GM12878 (cell line): ENCODE measurements at regions of chr3 and their contacts with region 1.

Region 1: GRCh38 chr3:16828815-16829214 is 55.9 kb upstream of the PLCL2 start:
- DNase-seq: no peak
- ATAC-seq: peak; percentile 90
- H3K4me3 ChIP-seq: no peak overlapping the region
- H3K27ac ChIP-seq: no peak overlapping the region
- H3K4me1 ChIP-seq: peaks cover 8% of the 10 kb centered on the region
- H3K27me3 ChIP-seq: no peaks in the 10 kb centered on the region
- CTCF ChIP-seq: peak; percentile 58 to 65 (median 60)
- EP300 ChIP-seq: no peak
- POLR2A ChIP-seq: no peak
- RAD21 ChIP-seq: peak; percentile 93

Region 2: GRCh38 chr3:17032407-17033034 is 203.7 kb after region 1 on chr3:
- CTCF ChIA-PET with region 1: interaction called, 39 read pairs
- POLR2A ChIA-PET with region 1: no interaction called
- RAD21 ChIA-PET with region 1: interaction called, 34 read pairs
- SMC1A ChIA-PET with region 1: interaction called, 15 read pairs
- in situ Hi-C with region 1: no loop called
- intact Hi-C with region 1: loop called (anchors 5 kb)
- DNase-seq: no peak
- ATAC-seq: peak; percentile 81
- H3K4me3 ChIP-seq: no peak overlapping the region
- H3K27ac ChIP-seq: no peak overlapping the region
- H3K4me1 ChIP-seq: peaks cover 15% of the 10 kb centered on the region
- H3K27me3 ChIP-seq: no peaks in the 10 kb centered on the region
- CTCF ChIP-seq: peak; percentile 54 to 64 (median 54); a peak in 5 of 6 replicates
- EP300 ChIP-seq: no peak
- POLR2A ChIP-seq: no peak
- RAD21 ChIP-seq: peak; percentile 76

Region 3: GRCh38 chr3:17227472-17227871 is 398.7 kb after region 1 on chr3:
- CTCF ChIA-PET with region 1: interaction called, 14 read pairs
- POLR2A ChIA-PET with region 1: no interaction called
- RAD21 ChIA-PET with region 1: interaction called, 33 read pairs
- SMC1A ChIA-PET with region 1: interaction called, 10 read pairs
- in situ Hi-C with region 1: loop called (anchors 5 kb)
- intact Hi-C with region 1: no loop called
- DNase-seq: no peak
- ATAC-seq: no peak
- H3K4me3 ChIP-seq: no peak overlapping the region
- H3K27ac ChIP-seq: no peak overlapping the region
- H3K4me1 ChIP-seq: peaks cover 5% of the 10 kb centered on the region; the same call in 1 of the 2 replicates
- H3K27me3 ChIP-seq: no peaks in the 10 kb centered on the region
- CTCF ChIP-seq: no peak
- EP300 ChIP-seq: no peak
- POLR2A ChIP-seq: no peak
- RAD21 ChIP-seq: no peak